Natural killer cell (primary cell): ENCODE measurements at regions of chr9 and their contacts with region 1.

Region 1: DNA sequence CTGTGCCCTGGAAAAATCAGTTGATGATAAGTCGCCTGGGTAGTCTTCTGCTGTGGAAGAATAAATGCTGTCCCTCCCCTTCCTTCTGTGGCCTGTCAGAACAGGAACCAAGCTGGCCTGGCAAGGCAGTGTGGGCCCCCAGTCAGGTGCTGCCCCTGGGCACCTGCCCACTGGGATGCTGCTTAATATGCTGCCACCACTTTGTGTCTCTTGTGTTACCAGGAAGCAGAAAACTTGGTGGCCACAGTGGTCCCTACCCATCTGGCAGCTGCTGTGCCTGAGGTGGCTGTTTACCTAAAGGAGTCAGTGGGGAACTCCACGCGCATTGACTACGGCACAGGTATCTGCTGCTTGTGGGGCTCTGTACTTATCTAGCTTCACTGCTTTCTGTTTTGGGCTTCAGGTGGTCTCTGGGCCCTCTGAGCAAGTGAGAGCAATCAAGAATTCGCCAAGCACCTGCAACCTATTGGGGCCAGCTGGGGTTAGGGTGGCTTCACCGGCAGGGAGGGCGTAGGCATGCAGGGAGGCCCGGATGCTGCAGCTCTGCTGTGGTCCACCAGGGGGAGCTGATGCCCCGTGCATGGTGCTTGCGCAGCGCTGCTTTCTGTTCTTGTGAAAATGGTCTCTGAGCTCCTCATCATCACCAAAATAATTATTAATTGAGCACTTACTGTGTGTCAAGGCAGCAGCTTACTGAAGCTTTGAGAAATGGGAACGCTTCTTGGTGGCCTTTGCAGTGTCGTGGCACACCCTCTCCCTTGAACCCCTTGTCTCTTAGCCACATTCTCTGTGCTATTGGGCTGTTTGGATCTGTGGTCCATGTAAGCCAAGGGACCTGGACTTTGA is 20.3 kb downstream of the PTPA start:
- DNase-seq: peak; percentile 80 to 92
- ATAC-seq: peak; percentile 94 to 100 (median 99)
- H3K4me3 ChIP-seq: no peak overlapping the region
- H3K4me3 Mint-ChIP-seq: no peak overlapping the region
- H3K27ac ChIP-seq: no peak overlapping the region
- H3K27ac Mint-ChIP-seq: no peak overlapping the region
- H3K4me1 ChIP-seq: peaks cover 8% of the 10 kb centered on the region
- H3K4me1 Mint-ChIP-seq: peaks cover 5 to 7% of the 10 kb centered on the region in 2 donors
- H3K27me3 ChIP-seq: no peaks in the 10 kb centered on the region
- H3K27me3 Mint-ChIP-seq: no peaks in the 10 kb centered on the region
- CTCF ChIP-seq: peak; percentile 98

Region 2: DNA sequence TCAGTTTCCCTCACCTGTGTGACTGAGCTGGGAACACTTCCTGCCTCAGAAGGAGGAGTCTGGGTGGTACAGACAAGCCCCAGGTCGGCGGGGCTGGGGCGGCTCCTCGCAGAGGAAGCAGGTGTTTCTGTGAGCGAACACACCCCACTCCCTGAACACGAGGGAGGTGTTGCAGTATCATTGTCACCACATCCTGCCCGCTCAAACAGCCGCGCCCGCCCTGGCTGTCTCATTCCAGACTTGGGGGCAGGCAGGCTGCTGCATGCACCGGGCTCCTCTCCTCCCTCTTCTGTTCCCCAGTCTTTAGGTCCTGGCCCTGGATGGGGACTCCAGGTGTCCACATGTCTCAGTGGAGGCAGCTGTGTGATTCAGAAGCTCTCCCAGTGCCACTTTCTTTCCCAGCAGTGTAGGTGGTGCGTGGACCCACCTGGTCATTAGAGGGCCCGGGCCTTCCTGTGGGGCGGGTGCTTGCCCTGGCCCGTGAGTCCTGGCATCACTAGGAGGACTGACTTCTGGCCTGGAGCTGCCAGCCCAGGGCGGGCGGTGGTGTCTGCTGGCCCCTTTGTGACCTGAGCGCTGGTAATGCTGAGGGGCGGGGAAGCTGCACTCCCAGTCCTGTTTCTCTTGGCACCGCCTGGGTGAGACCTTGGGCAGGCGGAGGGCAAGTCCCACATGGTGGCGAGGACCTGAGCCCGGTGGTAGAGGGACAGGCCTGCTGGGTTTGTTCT is 229.0 kb before region 1 on chr9:
- intact Hi-C with region 1: no loop called
- DNase-seq: peak; percentile 81 to 93
- ATAC-seq: peak; percentile 78 to 92 (median 89)
- H3K4me3 ChIP-seq: peak overlapping the region; percentile 12
- H3K4me3 Mint-ChIP-seq: peak overlapping the region; percentile 83
- H3K27ac ChIP-seq: peak overlapping the region; percentile 84
- H3K27ac Mint-ChIP-seq: peak overlapping the region; percentile 87 to 95
- H3K4me1 ChIP-seq: peaks cover 81% of the 10 kb centered on the region
- H3K4me1 Mint-ChIP-seq: peaks cover 40 to 78% of the 10 kb centered on the region in 2 donors
- H3K27me3 ChIP-seq: no peaks in the 10 kb centered on the region
- H3K27me3 Mint-ChIP-seq: no peaks in the 10 kb centered on the region
- CTCF ChIP-seq: no peak

Region 3: DNA sequence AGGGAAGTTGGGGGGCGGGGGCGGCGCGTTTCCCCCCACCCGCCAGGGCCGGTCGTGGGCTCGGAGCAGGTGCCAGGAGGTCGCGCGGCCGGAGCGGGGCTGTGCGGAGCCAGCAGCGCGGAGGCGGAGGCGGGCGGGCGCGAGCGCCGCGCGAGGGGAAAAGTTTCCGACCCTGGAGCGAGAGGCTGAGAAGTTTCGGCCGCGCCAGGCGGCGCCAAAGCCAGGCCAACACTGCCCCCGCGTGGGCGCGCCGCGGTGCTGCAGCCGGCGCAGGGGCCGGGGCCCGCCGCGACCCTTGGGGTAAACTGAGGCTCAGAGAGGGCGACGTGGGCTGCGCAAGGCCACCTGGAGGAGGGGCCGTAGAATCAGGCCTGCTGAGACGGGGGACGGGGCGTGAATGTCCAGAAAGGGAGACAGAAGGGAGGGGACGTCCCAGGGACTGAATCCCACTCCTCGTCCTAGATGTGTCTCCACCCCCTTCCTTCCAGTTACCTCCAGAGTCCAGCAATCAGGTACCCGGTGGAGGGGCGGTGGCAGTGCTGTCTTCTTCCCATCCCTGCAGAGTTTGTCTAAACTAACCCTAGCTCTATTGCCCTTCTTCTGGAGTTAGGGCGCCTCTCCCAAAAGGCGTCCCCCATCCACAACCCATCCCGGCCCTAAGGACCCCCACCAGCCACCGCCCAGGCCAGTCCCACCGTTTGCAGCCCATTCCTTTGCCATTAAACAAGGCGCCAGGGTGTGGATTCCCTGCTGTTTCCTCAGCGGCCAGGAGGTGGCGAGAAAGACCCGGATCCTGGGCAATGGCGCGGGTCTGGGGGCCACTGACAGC is 479.2 kb after region 1 on chr9:
- intact Hi-C with region 1: loop called (anchors 2 kb)
- DNase-seq: peak; percentile 71 to 85
- ATAC-seq: peak; percentile 72 to 87 (median 78)
- H3K4me3 ChIP-seq: peak overlapping the region; percentile 33
- H3K4me3 Mint-ChIP-seq: peak overlapping the region; percentile 62
- H3K27ac ChIP-seq: peak overlapping the region; percentile 37
- H3K27ac Mint-ChIP-seq: peak overlapping the region in 1 of 2 donors; percentile 96
- H3K4me1 ChIP-seq: peaks cover 43% of the 10 kb centered on the region
- H3K4me1 Mint-ChIP-seq: peaks cover 28 to 47% of the 10 kb centered on the region in 2 donors
- H3K27me3 ChIP-seq: no peaks in the 10 kb centered on the region
- H3K27me3 Mint-ChIP-seq: peaks cover 0 to 3% of the 10 kb centered on the region in 2 donors
- CTCF ChIP-seq: peak; percentile 98

Region 4: DNA sequence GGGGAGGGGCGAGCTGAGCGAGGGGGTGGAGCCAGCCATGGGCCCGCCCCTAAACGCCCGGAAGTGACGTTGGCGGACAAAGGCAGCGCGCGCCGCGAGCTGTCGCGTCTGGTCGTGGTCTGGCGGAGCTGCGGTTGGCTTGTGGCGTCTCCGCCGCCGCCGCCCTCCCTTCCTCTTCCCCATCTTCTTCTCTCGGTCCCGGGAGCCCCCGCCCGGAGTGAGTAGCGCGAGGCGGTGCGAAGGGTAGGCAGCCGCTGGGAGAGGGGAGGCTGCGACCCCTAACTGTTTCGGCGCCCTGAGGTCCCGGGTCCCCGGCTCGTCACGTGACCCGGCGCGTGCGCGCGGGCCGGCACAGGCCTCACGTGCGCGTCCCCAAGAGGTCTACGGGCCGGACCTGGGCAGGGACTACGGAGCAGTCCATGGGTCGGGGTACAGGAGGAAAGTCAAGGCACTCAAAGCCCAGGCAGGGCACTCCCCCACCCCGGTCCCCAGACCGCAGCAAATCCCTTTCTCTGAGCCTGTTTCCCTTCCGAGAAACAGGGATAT is 494.6 kb after region 1 on chr9 and contains the start of gene NTMT1:
- intact Hi-C with region 1: loop called (anchors 1 kb)
- DNase-seq: peak; percentile 92 to 94
- ATAC-seq: peak; percentile 86 to 92 (median 89)
- H3K4me3 ChIP-seq: peak within 1 kb of the TSS; percentile 90
- H3K4me3 Mint-ChIP-seq: peak within 1 kb of the TSS; percentile 84
- H3K27ac ChIP-seq: peak within 1 kb of the TSS; percentile 91
- H3K27ac Mint-ChIP-seq: peak within 1 kb of the TSS; percentile 93
- H3K4me1 ChIP-seq: peaks cover 49% of the 10 kb centered on the region
- H3K4me1 Mint-ChIP-seq: peaks cover 42 to 48% of the 10 kb centered on the region in 2 donors
- H3K27me3 ChIP-seq: peaks cover 8% of the 10 kb centered on the region
- H3K27me3 Mint-ChIP-seq: peaks cover 4 to 8% of the 10 kb centered on the region in 2 donors
- CTCF ChIP-seq: no peak
- total RNA-seq, gene NTMT1: 17.1 to 23.5 (median 17.1) TPM

Region 5: DNA sequence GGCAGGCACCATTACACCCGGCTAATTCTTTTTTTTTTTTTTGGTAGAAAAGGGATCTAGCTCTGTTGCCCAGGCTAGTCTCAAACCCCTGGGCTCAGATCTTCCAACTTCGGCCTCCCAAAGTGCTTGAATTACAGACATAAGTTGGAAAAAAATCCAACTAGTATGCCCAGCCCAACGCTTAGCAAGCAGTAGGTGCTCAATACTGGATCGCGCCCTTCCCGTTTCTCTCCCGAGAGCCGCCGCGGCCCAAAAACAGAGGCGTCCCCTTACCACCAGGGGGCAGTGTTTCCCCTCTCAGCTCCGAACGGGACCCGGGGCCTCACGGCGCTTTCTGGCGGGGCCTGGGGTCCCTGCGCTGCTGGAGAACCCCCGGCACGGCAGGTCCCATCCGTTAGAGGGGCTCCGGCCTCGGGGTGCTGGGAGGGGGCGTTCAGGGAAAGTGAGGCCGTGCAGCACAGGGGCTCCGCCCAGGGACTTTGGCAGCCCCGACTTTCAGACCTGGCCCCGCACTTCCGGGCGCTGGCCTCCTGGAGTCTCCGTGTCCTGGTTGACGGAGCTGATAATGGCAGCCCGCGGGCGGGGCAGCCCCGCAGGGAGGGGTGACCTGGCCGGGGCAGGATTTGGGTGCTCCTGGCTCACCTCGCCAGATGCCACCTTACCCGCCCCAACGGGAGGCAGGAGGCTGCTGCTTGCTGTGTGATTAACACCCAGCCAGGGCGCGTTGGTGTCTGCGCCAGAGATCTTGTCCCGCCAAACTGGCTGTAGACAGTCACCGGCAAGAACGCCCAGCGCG is 606.2 kb after region 1 on chr9:
- intact Hi-C with region 1: loop called (anchors 5 kb)
- DNase-seq: peak; percentile 82 to 94
- ATAC-seq: peak; percentile 88 to 91 (median 89)
- H3K4me3 ChIP-seq: peak overlapping the region; percentile 52
- H3K4me3 Mint-ChIP-seq: peak overlapping the region; percentile 71
- H3K27ac ChIP-seq: peak overlapping the region; percentile 63
- H3K27ac Mint-ChIP-seq: peak overlapping the region in 1 of 2 donors; percentile 77
- H3K4me1 ChIP-seq: peaks cover 15% of the 10 kb centered on the region
- H3K4me1 Mint-ChIP-seq: peaks cover 0 to 14% of the 10 kb centered on the region in 2 donors
- H3K27me3 ChIP-seq: peaks cover 3% of the 10 kb centered on the region
- H3K27me3 Mint-ChIP-seq: peaks cover 0 to 3% of the 10 kb centered on the region in 2 donors
- CTCF ChIP-seq: peak; percentile 96

Region 6: DNA sequence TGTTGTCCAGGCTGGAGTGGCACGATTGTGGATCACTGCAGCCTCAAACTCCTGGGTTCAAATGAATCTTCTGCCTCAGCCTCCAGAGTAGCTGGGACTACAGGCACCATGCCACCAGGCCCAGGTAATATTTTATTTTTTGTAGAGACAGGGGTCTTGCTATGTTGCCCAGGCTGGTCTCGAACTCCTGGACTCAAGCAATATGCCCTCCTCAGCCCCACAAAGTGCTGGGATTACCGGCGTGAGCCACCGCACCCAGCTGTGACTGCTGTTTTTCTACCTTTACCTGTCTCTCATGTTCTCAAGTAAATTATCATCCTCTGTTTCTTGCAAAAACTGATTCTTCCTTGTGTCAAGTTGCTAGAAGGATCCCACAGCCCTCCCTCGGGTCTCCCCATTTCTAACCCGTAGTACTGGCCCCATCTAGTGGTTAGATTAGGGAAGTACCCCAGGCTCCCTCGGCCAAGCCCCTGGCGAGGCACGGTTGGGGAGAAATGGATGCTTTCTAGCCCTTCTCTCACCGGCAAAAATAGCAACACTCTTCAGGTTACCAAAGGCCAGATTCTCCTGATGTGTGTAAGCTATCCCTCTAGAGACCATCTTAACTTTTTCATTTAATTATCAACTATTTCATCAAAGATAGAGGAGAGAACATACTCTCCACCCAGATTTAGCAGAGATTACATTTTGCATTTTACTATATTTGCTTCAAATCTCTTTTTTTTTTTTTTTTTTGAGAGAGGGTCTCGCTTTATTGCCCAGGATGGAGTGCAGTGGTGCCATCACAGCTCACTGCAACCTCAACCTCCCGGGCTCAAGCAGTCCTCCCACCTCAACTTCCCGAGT is 652.2 kb after region 1 on chr9:
- intact Hi-C with region 1: loop called (anchors 2 kb)
- DNase-seq: peak; percentile 50 to 84
- ATAC-seq: peak; percentile 93 to 100 (median 99)
- H3K4me3 ChIP-seq: no peak overlapping the region
- H3K4me3 Mint-ChIP-seq: no peak overlapping the region
- H3K27ac ChIP-seq: no peak overlapping the region
- H3K27ac Mint-ChIP-seq: no peak overlapping the region
- H3K4me1 ChIP-seq: no peaks in the 10 kb centered on the region
- H3K4me1 Mint-ChIP-seq: peaks cover 0 to 6% of the 10 kb centered on the region in 2 donors
- H3K27me3 ChIP-seq: no peaks in the 10 kb centered on the region
- H3K27me3 Mint-ChIP-seq: peaks cover 23 to 27% of the 10 kb centered on the region in 2 donors
- CTCF ChIP-seq: peak; percentile 84

Region 7: DNA sequence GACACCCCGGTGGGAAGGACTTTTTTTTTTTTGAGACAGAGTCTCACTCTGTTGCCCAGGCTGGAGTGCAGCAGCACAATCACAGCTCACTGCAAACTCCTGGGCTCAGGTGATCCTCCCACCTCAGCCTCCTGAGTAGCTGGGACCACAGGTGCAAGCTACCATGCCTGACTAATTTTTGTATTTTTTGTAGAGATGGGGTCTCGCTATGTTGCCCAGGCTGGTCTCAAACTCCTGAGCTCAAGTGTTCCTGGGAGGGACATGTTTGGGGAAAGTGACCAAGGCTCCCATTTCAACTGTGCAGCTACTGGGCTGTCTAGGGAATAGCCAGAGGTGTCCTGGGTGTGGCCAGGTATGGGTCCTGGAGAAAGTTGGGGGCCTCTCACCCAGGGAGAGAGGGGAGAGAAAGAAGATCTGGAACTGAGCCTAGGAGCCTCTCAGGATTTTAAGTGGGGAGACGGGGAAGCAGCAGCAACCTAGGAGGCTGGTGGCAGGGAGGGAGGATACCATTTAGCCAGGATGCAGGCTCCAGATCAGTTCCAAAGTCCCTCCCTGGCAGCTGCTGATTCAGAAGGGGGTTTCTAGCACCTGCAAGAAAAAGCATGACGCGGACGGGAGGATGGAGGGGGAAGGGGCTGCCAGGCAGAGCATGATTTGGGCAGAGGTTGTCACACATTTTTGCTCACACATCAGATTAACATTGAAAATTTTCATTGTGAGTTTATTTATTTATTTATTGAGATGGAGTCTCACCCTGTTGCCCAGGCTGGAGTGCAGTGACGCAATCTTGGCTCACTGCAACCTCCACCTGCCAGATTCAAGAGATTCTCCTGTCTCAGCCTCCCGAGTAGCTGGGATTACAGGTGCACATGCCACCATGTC is 664.7 kb after region 1 on chr9:
- intact Hi-C with region 1: loop called (anchors 2 kb)
- DNase-seq: no peak
- ATAC-seq: no peak
- H3K4me3 ChIP-seq: no peak overlapping the region
- H3K4me3 Mint-ChIP-seq: no peak overlapping the region
- H3K27ac ChIP-seq: no peak overlapping the region
- H3K27ac Mint-ChIP-seq: no peak overlapping the region
- H3K4me1 ChIP-seq: no peaks in the 10 kb centered on the region
- H3K4me1 Mint-ChIP-seq: peaks cover 0 to 4% of the 10 kb centered on the region in 2 donors
- H3K27me3 ChIP-seq: no peaks in the 10 kb centered on the region
- H3K27me3 Mint-ChIP-seq: peaks cover 3 to 7% of the 10 kb centered on the region in 2 donors
- CTCF ChIP-seq: no peak